T-cell (primary cell): ENCODE measurements at regions of chr10 and their contacts with region 1.

Region 1: GRCh38 chr10:76265441-76266080 is 834.1 kb downstream of the LRMDA start:
- DNase-seq: no peak
- ATAC-seq: no peak
- H3K4me3 ChIP-seq: no peak overlapping the region
- H3K4me3 Mint-ChIP-seq: no peak overlapping the region
- H3K27ac ChIP-seq: no peak overlapping the region
- H3K27ac Mint-ChIP-seq: no peak overlapping the region
- H3K4me1 ChIP-seq: no peaks in the 10 kb centered on the region
- H3K4me1 Mint-ChIP-seq: no peaks in the 10 kb centered on the region
- H3K27me3 ChIP-seq: no peaks in the 10 kb centered on the region
- H3K27me3 Mint-ChIP-seq: peaks cover 0 to 5% of the 10 kb centered on the region in 2 donors

Region 2: GRCh38 chr10:76113959-76114358 is 151.6 kb before region 1 on chr10:
- CTCF ChIA-PET with region 1: no interaction called
- POLR2A ChIA-PET with region 1: no interaction called
- DNase-seq: no peak
- ATAC-seq: no peak
- H3K4me3 ChIP-seq: no peak overlapping the region
- H3K4me3 Mint-ChIP-seq: no peak overlapping the region
- H3K27ac ChIP-seq: no peak overlapping the region
- H3K27ac Mint-ChIP-seq: no peak overlapping the region
- H3K4me1 ChIP-seq: no peaks in the 10 kb centered on the region
- H3K4me1 Mint-ChIP-seq: no peaks in the 10 kb centered on the region
- H3K27me3 ChIP-seq: peaks cover 0 to 4% of the 10 kb centered on the region in 2 experiments
- H3K27me3 Mint-ChIP-seq: peaks cover 0 to 3% of the 10 kb centered on the region in 2 donors

Region 3: GRCh38 chr10:76251841-76252671 is 13.5 kb before region 1 on chr10:
- CTCF ChIA-PET with region 1: no interaction called
- POLR2A ChIA-PET with region 1: interaction called in 1 of 2 experiments, 17 read pairs
- DNase-seq: no peak
- ATAC-seq: no peak
- H3K4me3 ChIP-seq: no peak overlapping the region
- H3K4me3 Mint-ChIP-seq: no peak overlapping the region
- H3K27ac ChIP-seq: no peak overlapping the region
- H3K27ac Mint-ChIP-seq: no peak overlapping the region
- H3K4me1 ChIP-seq: no peaks in the 10 kb centered on the region
- H3K4me1 Mint-ChIP-seq: no peaks in the 10 kb centered on the region
- H3K27me3 ChIP-seq: no peaks in the 10 kb centered on the region
- H3K27me3 Mint-ChIP-seq: no peaks in the 10 kb centered on the region